ENCODE measurements at regions of chr9 and their contacts with region 1.

Region 1: DNA sequence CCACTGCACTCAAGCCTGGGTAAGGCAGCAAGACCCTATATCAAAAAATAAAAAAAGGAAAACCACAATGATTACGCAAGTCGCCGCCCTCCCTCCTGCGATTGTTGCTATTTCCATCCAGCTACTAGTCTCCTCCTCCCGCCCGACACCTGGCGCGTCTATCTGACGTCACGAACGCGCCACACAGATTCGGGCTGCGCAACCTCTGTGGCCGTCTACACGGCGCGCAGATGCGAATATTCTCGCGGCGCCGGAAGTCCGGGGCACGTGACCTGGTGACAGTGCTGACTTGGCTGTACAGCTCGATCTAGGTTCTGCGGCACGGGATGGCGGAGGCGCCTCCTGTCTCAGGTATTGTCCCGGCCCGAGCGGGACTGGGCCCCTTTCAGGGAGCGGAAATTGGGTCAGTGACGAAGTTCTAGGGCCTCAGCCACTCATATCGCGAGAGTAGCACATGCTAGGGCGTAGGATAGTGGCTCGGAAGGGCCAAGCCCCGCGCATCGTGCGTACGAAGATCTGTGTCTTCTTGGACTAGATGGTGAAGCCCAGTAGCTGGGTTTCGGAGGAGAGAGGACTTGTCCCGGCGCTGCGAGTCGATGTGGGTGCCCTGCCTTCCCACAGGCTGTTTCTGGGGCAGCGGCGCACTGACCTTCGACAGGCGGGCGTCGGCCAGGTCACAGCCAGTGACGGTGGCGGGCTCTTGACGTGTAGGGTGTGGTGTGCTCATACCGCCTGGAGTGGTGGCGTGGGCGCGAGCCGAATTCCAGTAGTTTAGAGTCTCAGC is at the start of gene NFX1:
- DNase-seq: peak; percentile 99
- ATAC-seq: peak; percentile 89
- H3K4me3 Mint-ChIP-seq: peak within 1 kb of the TSS; percentile 90
- H3K27ac Mint-ChIP-seq: peak within 1 kb of the TSS; percentile 99
- H3K4me1 Mint-ChIP-seq: peaks cover 64% of the 10 kb centered on the region
- H3K27me3 Mint-ChIP-seq: no peaks in the 10 kb centered on the region
- total RNA-seq, gene NFX1: 31.2 to 33.7 TPM

Region 2: DNA sequence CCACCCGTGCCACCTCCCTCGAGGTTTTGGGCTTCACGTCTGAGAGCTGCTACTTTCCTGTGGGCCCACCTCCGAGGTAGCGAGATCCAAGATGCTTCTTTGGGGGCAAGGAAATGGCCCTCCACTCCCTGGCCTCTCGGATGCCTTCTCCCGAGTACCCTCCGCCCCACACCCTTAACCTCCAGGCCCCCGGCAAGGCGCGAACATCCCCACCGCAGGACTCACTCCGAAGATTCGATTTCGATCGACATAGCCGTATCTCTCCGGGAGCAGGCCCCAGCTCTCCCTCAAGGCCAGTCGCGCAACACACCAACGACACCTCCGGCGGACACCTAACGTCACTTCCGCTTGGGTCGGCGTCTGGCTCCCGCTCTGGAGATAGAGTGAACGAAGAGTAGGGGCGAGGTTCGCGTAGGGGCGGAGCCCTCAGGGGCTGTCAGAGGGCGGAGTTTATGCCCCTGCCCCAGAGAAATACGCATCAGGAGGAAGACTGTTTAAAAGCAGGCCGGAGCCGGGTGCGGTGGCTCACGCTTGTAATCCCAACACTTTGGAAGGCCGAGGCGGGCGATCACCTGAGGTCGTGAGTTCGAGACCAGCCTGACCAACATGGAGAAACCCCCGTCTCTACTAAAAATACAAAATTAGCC is 214.0 kb before region 1 on chr9 and contains the start of gene SMU1:
- CTCF ChIA-PET with region 1: no interaction called
- POLR2A ChIA-PET with region 1: interaction called, 7 read pairs
- intact Hi-C with region 1: loop called (anchors 1 kb)
- DNase-seq: peak; percentile 98
- ATAC-seq: peak; percentile 93
- H3K4me3 Mint-ChIP-seq: peak within 1 kb of the TSS; percentile 100
- H3K27ac Mint-ChIP-seq: peak within 1 kb of the TSS; percentile 100
- H3K4me1 Mint-ChIP-seq: peaks cover 39% of the 10 kb centered on the region
- H3K27me3 Mint-ChIP-seq: no peaks in the 10 kb centered on the region
- total RNA-seq, gene SMU1: 23.2 to 29.6 TPM

Region 3: DNA sequence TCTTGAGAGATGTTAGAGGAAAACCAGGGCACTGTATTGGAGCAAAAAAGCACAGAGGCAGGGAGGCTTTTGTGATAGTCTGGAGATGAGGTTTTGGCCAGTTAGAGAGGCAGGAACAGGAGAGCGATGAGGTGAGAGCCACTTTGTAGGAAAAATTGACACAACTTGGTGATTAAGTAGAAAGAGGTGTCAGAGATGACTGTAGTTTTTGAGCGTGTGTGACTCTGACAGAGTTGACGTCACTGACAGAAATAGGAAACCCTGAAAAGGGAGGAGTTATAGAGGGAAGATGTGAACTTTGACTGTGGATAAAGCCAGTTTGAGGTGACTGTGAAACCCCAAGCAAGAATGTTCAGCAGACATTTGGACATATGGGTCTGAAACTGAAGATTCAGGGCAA is 15.6 kb after region 1 on chr9:
- CTCF ChIA-PET with region 1: interaction called, 6 read pairs
- POLR2A ChIA-PET with region 1: interaction called, 4 read pairs
- intact Hi-C with region 1: loop called (anchors 1 kb)
- DNase-seq: peak; percentile 59
- ATAC-seq: peak; percentile 94
- H3K4me3 Mint-ChIP-seq: no peak overlapping the region
- H3K27ac Mint-ChIP-seq: no peak overlapping the region
- H3K4me1 Mint-ChIP-seq: peaks cover 29% of the 10 kb centered on the region
- H3K27me3 Mint-ChIP-seq: no peaks in the 10 kb centered on the region

Region 4: GRCh38 chr9:33415501-33416038 is 125.1 kb after region 1 on chr9:
- CTCF ChIA-PET with region 1: interaction called, 3 read pairs
- POLR2A ChIA-PET with region 1: no interaction called
- intact Hi-C with region 1: loop called (anchors 1 to 5 kb)
- DNase-seq: peak; percentile 97
- ATAC-seq: peak; percentile 92
- H3K4me3 Mint-ChIP-seq: peak overlapping the region; percentile 31
- H3K27ac Mint-ChIP-seq: peak overlapping the region; percentile 95
- H3K4me1 Mint-ChIP-seq: peaks cover 41% of the 10 kb centered on the region
- H3K27me3 Mint-ChIP-seq: no peaks in the 10 kb centered on the region

Region 5: GRCh38 chr9:33721674-33722358 is 431.4 kb after region 1 on chr9:
- CTCF ChIA-PET with region 1: no interaction called
- POLR2A ChIA-PET with region 1: no interaction called
- intact Hi-C with region 1: loop called in 1 of 2 experiments (anchors 5 kb)
- DNase-seq: peak; percentile 94
- ATAC-seq: peak; percentile 68
- H3K4me3 Mint-ChIP-seq: no peak overlapping the region
- H3K27ac Mint-ChIP-seq: no peak overlapping the region
- H3K4me1 Mint-ChIP-seq: peaks cover 4% of the 10 kb centered on the region
- H3K27me3 Mint-ChIP-seq: peaks cover 5% of the 10 kb centered on the region

Region 6: GRCh38 chr9:35071814-35072460 is 1781.5 kb after region 1 on chr9:
- CTCF ChIA-PET with region 1: no interaction called
- POLR2A ChIA-PET with region 1: no interaction called
- intact Hi-C with region 1: loop called in 1 of 2 experiments (anchors 10 kb)
- DNase-seq: peak; percentile 83
- ATAC-seq: peak; percentile 47
- H3K4me3 Mint-ChIP-seq: peak overlapping the region; percentile 91
- H3K27ac Mint-ChIP-seq: peak overlapping the region; percentile 95
- H3K4me1 Mint-ChIP-seq: peaks cover 56% of the 10 kb centered on the region
- H3K27me3 Mint-ChIP-seq: no peaks in the 10 kb centered on the region